ENCODE measurements at regions of chr3 and their contacts with region 1.

Region 1: DNA sequence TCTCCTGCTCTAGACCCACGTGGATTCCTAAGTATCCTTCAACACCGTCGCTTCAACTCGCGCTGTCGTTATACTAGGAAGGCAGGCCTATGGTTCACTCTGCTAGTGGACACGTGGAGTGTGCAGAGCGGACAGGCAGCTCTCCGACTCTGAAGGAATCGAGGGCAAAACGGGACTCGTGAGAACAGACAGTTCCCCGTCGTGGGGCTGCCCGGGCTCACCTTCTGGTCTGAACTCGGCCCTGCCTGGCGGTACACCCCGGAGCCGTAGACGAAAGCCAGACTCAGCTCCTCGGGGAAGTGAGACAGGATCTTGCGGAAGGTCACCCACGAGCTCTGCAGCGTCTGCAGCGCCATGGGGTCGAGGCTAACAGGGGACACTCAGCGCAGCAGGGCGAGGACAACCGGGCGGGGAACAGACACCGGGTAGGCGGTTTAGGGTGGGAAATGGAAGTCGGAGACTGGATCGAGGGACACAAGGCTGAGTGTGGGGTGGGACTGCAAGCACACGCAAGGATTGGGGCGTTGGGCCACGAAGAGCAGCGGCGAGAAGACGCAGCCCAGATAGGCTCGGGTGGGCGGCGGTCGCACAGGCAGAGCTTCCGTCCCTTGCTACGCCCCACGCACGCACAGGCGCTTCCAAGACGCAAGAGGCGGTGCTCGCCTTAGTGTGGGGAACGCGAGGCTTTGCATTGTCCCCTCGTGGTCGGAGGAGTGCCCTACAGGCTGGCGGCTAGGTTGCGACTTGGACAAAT is at the start of gene TAMM41:
- DNase-seq: peak; percentile 85 to 99 (median 94)

Region 2: GRCh38 chr3:11719406-11720230 is 126.8 kb before region 1 on chr3:
- intact Hi-C with region 1: loop called (anchors 5 kb)
- DNase-seq: peak; percentile 46 to 97 (median 76)

Measured in posterior cingulate gyrus (tissue), 11 donors.